ENCODE measurements at regions of chr15 and their contacts with region 1.

Region 1: GRCh38 chr15:42474827-42475226 is 16.1 kb downstream of the ZNF106 start:
- DNase-seq: no peak
- ATAC-seq: no peak
- H3K4me3 ChIP-seq: no peak overlapping the region
- H3K27ac ChIP-seq: peak overlapping the region; percentile 40 to 57 (median 52)
- H3K4me1 ChIP-seq: peaks cover 30 to 35% of the 10 kb centered on the region in 2 donors
- H3K27me3 ChIP-seq: no peaks in the 10 kb centered on the region
- CTCF ChIP-seq: no peak
- POLR2A ChIP-seq: no peak

Region 2: GRCh38 chr15:42065033-42065432 is 409.8 kb before region 1 on chr15:
- in situ Hi-C with region 1: no loop called
- intact Hi-C with region 1: loop called (anchors 5 kb)
- DNase-seq: no peak
- ATAC-seq: no peak
- H3K4me3 ChIP-seq: no peak overlapping the region
- H3K27ac ChIP-seq: no peak overlapping the region
- H3K4me1 ChIP-seq: peaks cover 0 to 2% of the 10 kb centered on the region in 2 donors
- H3K27me3 ChIP-seq: no peaks in the 10 kb centered on the region
- CTCF ChIP-seq: no peak
- POLR2A ChIP-seq: no peak

Region 3: GRCh38 chr15:42152196-42152920 is 322.5 kb before region 1 on chr15:
- in situ Hi-C with region 1: no loop called
- intact Hi-C with region 1: loop called (anchors 5 kb)
- DNase-seq: peak; percentile 83 to 90
- ATAC-seq: peak; percentile 75 to 84
- H3K4me3 ChIP-seq: peak overlapping the region in 2 of 4 donors; percentile 22 to 31
- H3K27ac ChIP-seq: peak overlapping the region; percentile 93 to 100 (median 95)
- H3K4me1 ChIP-seq: peaks cover 40 to 50% of the 10 kb centered on the region in 2 donors
- H3K27me3 ChIP-seq: no peaks in the 10 kb centered on the region
- CTCF ChIP-seq: no peak
- POLR2A ChIP-seq: peak; percentile 53 to 75

Region 4: GRCh38 chr15:42207674-42208579 is 266.9 kb before region 1 on chr15 and contains the start of gene VPS39:
- in situ Hi-C with region 1: no loop called
- intact Hi-C with region 1: loop called (anchors 5 kb)
- DNase-seq: peak; percentile 62 to 74
- ATAC-seq: peak; percentile 92 to 97
- H3K4me3 ChIP-seq: peak within 1 kb of the TSS; percentile 83 to 98 (median 91)
- H3K27ac ChIP-seq: peak within 1 kb of the TSS; percentile 70 to 92 (median 79)
- H3K4me1 ChIP-seq: peaks cover 19 to 29% of the 10 kb centered on the region in 2 donors
- H3K27me3 ChIP-seq: no peaks in the 10 kb centered on the region
- CTCF ChIP-seq: no peak
- POLR2A ChIP-seq: peak; percentile 13 to 49
- total RNA-seq, gene VPS39: 28.8 to 41.8 (median 35.2) TPM

Region 5: DNA sequence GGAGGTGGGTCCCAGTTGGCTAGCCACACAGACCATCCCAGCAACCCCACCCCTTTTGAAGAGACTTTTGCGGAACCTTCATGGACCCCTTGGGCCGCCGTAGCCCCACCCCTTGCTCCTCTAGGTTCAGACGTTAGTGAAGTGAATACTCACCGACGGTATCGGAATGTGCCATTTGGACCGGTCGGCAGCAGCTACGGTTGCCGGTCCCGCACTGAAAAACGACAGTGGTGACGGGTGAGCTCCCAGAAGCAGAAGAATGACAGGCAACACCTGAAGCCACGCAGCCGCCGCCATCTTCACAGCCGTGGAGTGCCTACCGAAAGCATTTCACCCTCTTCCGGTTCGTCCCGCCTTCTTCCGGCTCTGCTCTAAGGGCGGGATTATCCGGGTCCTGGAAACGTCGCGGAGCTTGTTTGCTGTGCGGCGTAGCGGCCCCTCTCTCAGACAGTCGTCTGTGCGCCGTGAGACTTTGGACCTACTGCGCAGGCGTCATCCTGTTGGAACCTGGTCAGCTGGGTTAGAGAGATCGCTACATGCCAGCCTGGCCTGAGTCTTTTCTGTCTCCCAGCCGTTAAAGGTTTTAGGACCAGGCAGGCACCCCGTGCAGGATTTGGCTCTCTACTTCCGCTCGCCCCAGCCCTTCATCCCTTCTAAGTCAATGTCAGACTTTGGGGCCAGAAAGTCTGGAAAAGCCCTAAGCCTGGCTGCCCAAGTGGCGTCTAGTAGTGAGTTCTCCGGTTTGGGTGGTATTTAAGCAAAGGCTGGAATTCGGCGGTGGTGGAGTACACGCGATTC is 201.5 kb before region 1 on chr15 and contains the starts of genes GANC and TMEM87A:
- in situ Hi-C with region 1: loop called (anchors 5 to 10 kb)
- intact Hi-C with region 1: loop called (anchors 1 kb)
- DNase-seq: peak; percentile 98
- ATAC-seq: peak; percentile 92
- H3K4me3 ChIP-seq: peak within 1 kb of the TSS; percentile 80 to 86 (median 84)
- H3K27ac ChIP-seq: peak within 1 kb of the TSS; percentile 94 to 98 (median 98)
- H3K4me1 ChIP-seq: peaks cover 46 to 50% of the 10 kb centered on the region in 2 donors
- H3K27me3 ChIP-seq: no peaks in the 10 kb centered on the region
- CTCF ChIP-seq: peak in 1 of 5 experiments; percentile 4
- POLR2A ChIP-seq: peak; percentile 81 to 84
- total RNA-seq, gene GANC: 5.9 to 26.3 (median 11.9) TPM
- total RNA-seq, gene TMEM87A: 29.4 to 67.6 (median 37.4) TPM

Region 6: GRCh38 chr15:42332331-42332730 is 142.5 kb before region 1 on chr15:
- in situ Hi-C with region 1: no loop called
- intact Hi-C with region 1: loop called (anchors 5 kb)
- DNase-seq: no peak
- ATAC-seq: no peak
- H3K4me3 ChIP-seq: no peak overlapping the region
- H3K27ac ChIP-seq: peak overlapping the region; percentile 84 to 90 (median 87)
- H3K4me1 ChIP-seq: peaks cover 23 to 30% of the 10 kb centered on the region in 2 donors
- H3K27me3 ChIP-seq: no peaks in the 10 kb centered on the region
- CTCF ChIP-seq: no peak
- POLR2A ChIP-seq: no peak

Region 7: DNA sequence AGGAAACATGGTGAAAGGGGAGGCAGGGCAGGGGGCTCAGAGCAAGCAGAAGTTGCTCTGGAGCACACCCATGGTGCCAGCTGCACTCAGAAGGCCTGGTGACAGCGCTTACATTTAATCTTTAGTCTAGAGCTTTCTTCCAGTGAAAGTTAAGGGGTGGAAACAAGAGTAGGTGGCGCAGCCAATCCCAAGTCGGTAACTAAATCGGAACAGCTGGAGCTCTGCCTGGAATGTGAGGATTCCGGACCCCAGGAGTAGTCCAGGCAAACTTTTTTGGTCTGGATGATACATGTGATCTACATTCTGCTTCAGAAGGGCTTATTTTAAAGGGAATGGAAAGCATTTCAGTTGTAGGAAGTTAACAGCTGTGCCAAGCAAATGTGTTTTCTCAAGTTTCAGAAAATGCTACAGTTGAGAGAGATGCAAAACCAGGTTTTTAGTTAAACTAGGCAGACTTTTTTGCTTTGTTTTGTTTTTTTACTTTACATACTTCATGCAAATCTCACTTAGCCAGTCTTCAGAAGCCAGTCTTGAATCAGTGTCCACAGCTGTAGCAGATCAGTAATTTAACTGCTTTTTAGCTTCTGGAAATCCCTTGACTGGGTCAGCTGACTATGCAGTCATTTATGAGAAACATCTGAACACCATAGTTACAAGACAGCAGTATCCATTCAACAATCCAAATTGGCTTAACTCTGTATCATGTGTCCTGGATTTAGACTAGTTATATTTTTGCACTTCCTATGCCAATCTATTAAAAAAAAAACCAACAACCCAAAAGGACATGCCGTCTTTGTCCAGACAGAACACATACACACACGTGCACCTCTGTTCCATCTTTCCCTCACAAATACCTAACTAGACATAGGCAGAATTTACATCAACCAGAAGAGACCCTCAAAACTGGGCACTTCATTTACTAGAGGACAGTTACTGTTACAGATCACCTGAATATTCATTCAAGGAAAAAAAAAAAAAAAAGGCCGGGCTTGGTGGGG is 17.1 kb before region 1 on chr15:
- in situ Hi-C with region 1: no loop called
- intact Hi-C with region 1: loop called (anchors 2 kb)
- DNase-seq: peak; percentile 80 to 84
- ATAC-seq: peak; percentile 91 to 92
- H3K4me3 ChIP-seq: peak overlapping the region; percentile 20 to 53 (median 45)
- H3K27ac ChIP-seq: peak overlapping the region; percentile 82 to 92 (median 88)
- H3K4me1 ChIP-seq: peaks cover 50 to 51% of the 10 kb centered on the region in 2 donors
- H3K27me3 ChIP-seq: no peaks in the 10 kb centered on the region
- CTCF ChIP-seq: no peak
- POLR2A ChIP-seq: peak; percentile 60 to 89

Region 8: GRCh38 chr15:44435893-44436667 is 1961.3 kb after region 1 on chr15:
- in situ Hi-C with region 1: no loop called
- intact Hi-C with region 1: no loop called
- DNase-seq: no peak
- ATAC-seq: no peak
- H3K4me3 ChIP-seq: no peak overlapping the region
- H3K27ac ChIP-seq: no peak overlapping the region
- H3K4me1 ChIP-seq: peaks cover 16 to 17% of the 10 kb centered on the region in 2 donors
- H3K27me3 ChIP-seq: no peaks in the 10 kb centered on the region
- CTCF ChIP-seq: no peak
- POLR2A ChIP-seq: no peak

Measured in gastrocnemius medialis (tissue), 4 donors.